ENCODE measurements at regions of chr11 and their contacts with region 1.

Region 1: DNA sequence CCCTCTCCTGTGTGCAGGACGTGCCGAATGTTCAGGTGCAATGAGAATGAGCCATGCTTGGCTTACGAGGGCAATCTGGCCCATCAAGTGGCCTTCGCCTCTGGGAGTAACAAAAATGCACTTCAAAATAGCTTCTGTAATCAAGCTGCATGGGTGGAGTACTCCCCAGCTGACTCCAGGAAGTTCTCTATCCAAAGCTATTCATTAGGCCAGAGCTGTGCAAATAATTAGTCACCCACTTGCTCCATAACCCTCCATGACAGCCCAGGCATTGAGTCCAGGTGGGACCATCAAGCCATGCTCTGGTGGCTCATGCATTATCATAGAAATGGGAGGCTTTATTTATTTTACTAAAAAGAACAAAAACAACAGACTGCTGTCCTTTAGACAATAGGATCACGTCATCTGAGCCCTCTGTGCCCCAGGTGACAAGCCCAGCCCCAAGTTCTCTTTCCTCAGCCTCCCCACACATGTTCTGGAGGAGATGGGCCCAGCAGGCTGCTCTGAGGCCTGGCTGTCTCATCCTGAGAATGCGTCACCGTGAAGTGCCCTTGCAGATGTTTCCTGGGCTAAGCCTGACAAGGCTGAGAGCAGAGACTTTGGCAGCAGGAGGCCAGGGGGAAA is 244.7 kb downstream of the ETS1 start:
- DNase-seq: peak; percentile 98
- H3K4me3 ChIP-seq: no peak overlapping the region
- H3K27ac ChIP-seq: peak overlapping the region; percentile 83
- H3K4me1 ChIP-seq: peaks cover 31% of the 10 kb centered on the region
- H3K27me3 ChIP-seq: no peaks in the 10 kb centered on the region
- CTCF ChIP-seq: no peak
- POLR2A ChIP-seq: peak; percentile 47

Region 2: DNA sequence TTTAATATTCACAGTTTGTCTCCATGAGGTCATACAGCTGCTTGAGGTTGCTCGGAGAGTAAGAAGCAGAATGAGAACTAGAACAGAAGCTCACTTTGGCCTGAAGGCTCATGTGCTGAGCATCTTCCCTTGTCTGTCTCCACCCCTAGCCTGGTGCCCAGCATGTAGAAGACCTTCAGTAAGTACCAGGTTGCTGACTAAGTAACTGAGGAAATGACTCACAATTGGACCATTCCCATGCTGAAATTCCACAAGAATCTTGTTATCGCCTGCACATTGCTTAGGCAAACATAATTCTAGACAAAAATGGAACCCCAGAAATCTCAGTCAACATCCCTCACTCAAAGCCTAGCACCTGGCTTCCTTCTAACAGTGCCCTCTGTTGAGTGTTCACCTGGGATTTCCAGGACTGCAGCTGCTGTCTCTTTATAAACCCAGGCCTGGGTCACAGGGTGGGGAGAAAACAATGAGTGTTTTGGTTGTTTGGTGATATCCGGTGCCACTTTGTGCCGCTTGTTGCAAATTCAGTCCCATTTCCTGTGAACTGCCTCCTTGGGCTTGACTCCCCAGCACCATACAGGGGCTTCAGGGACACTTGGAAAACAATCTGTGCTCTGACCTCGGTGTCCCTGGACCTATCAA is 162.1 kb before region 1 on chr11:
- CTCF ChIA-PET with region 1: no interaction called
- POLR2A ChIA-PET with region 1: no interaction called
- dilution Hi-C with region 1: no loop called
- intact Hi-C with region 1: loop called (anchors 1 kb)
- DNase-seq: peak; percentile 93
- H3K4me3 ChIP-seq: no peak overlapping the region
- H3K27ac ChIP-seq: peak overlapping the region; percentile 97
- H3K4me1 ChIP-seq: peaks cover 19% of the 10 kb centered on the region
- H3K27me3 ChIP-seq: no peaks in the 10 kb centered on the region
- CTCF ChIP-seq: no peak
- POLR2A ChIP-seq: no peak

Region 3: DNA sequence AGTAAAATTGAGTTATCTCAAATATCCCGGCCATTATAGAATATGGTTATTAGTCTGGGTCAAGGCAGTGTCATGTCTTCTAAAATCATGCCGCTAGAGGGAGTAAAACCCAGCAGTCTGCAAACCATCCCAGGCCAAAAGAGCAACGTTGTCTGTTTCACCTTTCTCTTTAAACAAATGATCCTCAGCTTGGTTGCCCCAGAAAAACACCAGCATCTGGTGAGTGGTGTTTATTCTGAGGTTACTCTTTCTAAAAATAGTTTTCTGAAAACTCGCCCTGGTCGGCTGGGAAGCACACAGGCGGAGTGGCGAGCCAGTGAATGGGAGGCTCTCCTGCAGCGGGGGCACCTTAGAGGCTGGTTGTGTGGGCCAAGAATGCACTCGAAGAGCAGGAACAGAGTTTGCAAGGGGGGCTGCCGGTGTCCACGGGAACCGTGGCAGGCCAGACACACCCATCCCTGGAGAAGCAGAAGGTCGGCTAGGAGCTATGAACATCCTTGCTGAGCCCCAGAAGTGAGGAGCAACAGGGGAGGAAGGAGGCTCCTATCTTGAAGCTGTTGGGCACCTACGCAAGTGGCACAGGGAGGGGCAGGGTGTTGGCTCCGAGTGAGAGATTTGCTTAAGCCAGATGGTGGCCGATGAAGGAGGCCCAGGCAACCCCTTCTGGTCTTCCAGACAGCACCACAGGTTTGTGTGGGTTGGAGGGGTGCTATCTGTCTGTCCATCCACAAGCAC is 52.4 kb before region 1 on chr11:
- CTCF ChIA-PET with region 1: interaction called, 11 read pairs
- POLR2A ChIA-PET with region 1: no interaction called
- dilution Hi-C with region 1: no loop called
- intact Hi-C with region 1: loop called (anchors 1 kb)
- DNase-seq: peak; percentile 77
- H3K4me3 ChIP-seq: no peak overlapping the region
- H3K27ac ChIP-seq: no peak overlapping the region
- H3K4me1 ChIP-seq: no peaks in the 10 kb centered on the region
- H3K27me3 ChIP-seq: no peaks in the 10 kb centered on the region
- CTCF ChIP-seq: peak; percentile 71 to 72
- POLR2A ChIP-seq: no peak

Region 4: GRCh38 chr11:128375961-128376360 is 33.3 kb after region 1 on chr11:
- CTCF ChIA-PET with region 1: no interaction called
- POLR2A ChIA-PET with region 1: no interaction called
- dilution Hi-C with region 1: no loop called
- intact Hi-C with region 1: loop called (anchors 1 kb)
- DNase-seq: peak; percentile 49
- H3K4me3 ChIP-seq: no peak overlapping the region
- H3K27ac ChIP-seq: no peak overlapping the region
- H3K4me1 ChIP-seq: peaks cover 7% of the 10 kb centered on the region
- H3K27me3 ChIP-seq: no peaks in the 10 kb centered on the region
- CTCF ChIP-seq: no peak
- POLR2A ChIP-seq: no peak

Region 5: DNA sequence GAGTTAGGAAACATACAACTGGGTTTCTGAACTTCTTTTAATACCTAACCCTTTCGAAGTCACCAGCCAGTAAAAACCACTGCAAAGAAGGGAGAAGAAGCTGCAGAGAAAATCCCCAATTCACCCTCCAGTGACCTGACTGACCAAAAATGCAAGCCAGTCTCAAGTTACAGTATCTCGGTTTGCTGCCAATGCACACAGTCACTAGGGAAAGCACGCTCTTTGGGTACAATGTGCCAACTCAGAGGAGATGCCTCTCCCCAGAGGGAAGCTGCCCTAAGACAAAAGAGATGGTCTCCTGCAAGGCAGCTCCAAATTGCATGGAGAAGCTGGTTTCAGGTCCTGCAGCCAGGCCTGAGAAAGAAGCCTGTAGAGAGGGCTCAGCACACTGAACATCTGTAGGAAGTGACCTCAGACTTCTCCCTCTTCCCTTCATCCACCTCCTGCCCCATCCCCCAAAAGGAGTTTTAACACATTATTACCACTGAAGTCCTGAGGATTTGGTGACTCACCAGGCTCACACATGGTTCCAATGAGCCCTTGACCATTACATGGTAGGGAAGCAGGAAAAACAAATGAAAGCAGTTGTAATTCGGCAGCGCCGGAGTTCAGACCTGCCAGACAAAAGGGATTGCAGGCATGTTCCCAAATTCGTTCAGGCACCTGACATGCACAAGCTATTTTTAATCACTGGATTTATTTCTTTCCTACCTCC is 154.6 kb after region 1 on chr11:
- CTCF ChIA-PET with region 1: no interaction called
- POLR2A ChIA-PET with region 1: no interaction called
- dilution Hi-C with region 1: no loop called
- intact Hi-C with region 1: loop called (anchors 2 kb)
- DNase-seq: peak; percentile 96
- H3K4me3 ChIP-seq: peak overlapping the region in 1 of 3 experiments; percentile 28
- H3K27ac ChIP-seq: peak overlapping the region; percentile 94
- H3K4me1 ChIP-seq: peaks cover 67% of the 10 kb centered on the region
- H3K27me3 ChIP-seq: no peaks in the 10 kb centered on the region
- CTCF ChIP-seq: no peak
- POLR2A ChIP-seq: no peak

Region 6: DNA sequence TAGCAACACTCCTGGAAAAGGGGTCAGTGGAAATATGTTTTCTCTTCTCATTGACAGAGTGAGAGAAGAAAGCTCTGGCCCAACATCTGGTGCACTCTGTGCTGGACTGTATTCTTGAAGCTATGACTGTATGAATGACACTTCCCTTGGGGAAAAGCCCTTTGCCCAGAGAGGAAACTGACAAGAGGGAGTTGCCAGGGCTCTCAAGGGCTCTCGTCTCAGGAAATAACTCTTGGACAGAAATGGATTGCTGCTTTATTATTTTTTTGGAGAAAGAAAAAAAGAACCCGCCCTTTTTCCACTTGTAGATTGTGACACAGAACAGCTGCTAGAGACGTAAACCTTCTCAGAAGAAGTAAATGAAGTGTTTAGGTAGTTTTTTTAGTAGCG is 233.3 kb after region 1 on chr11:
- CTCF ChIA-PET with region 1: no interaction called
- POLR2A ChIA-PET with region 1: no interaction called
- dilution Hi-C with region 1: no loop called
- intact Hi-C with region 1: loop called (anchors 1 kb)
- DNase-seq: peak; percentile 96
- H3K4me3 ChIP-seq: no peak overlapping the region
- H3K27ac ChIP-seq: peak overlapping the region; percentile 84
- H3K4me1 ChIP-seq: peaks cover 43% of the 10 kb centered on the region
- H3K27me3 ChIP-seq: no peaks in the 10 kb centered on the region
- CTCF ChIP-seq: no peak
- POLR2A ChIP-seq: peak; percentile 28

Measured in endothelial cell of umbilical vein (primary cell).